ENCODE measurements at regions of chr11 and their contacts with region 1.

Region 1: GRCh38 chr11:61392981-61393595 is 701 bp downstream of the TMEM216 start:
- DNase-seq: no peak
- ATAC-seq: peak; percentile 37 to 41
- H3K4me3 ChIP-seq: peak overlapping the region; percentile 74
- H3K27ac ChIP-seq: peak overlapping the region; percentile 86
- H3K4me1 ChIP-seq: peaks cover 19% of the 10 kb centered on the region
- H3K27me3 ChIP-seq: no peaks in the 10 kb centered on the region
- CTCF ChIP-seq: no peak

Region 2: GRCh38 chr11:61332797-61333549 is 60.1 kb before region 1 on chr11 and contains the starts of genes DDB1 and TKFC:
- intact Hi-C with region 1: loop called (anchors 10 kb)
- DNase-seq: peak; percentile 97
- ATAC-seq: peak; percentile 97 to 98
- H3K4me3 ChIP-seq: peak within 1 kb of the TSS; percentile 89
- H3K27ac ChIP-seq: peak within 1 kb of the TSS; percentile 92
- H3K4me1 ChIP-seq: peaks cover 45% of the 10 kb centered on the region
- H3K27me3 ChIP-seq: no peaks in the 10 kb centered on the region
- CTCF ChIP-seq: no peak
- total RNA-seq, gene DDB1: 122 TPM
- total RNA-seq, gene TKFC: 35.0 TPM

Region 3: GRCh38 chr11:61509043-61510029 is 116.2 kb after region 1 on chr11:
- intact Hi-C with region 1: no loop called
- DNase-seq: peak; percentile 76
- ATAC-seq: peak; percentile 86 to 91
- H3K4me3 ChIP-seq: peak overlapping the region; percentile 42
- H3K27ac ChIP-seq: no peak overlapping the region
- H3K4me1 ChIP-seq: peaks cover 11% of the 10 kb centered on the region
- H3K27me3 ChIP-seq: peaks cover 68% of the 10 kb centered on the region
- CTCF ChIP-seq: peak; percentile 62

Region 4: DNA sequence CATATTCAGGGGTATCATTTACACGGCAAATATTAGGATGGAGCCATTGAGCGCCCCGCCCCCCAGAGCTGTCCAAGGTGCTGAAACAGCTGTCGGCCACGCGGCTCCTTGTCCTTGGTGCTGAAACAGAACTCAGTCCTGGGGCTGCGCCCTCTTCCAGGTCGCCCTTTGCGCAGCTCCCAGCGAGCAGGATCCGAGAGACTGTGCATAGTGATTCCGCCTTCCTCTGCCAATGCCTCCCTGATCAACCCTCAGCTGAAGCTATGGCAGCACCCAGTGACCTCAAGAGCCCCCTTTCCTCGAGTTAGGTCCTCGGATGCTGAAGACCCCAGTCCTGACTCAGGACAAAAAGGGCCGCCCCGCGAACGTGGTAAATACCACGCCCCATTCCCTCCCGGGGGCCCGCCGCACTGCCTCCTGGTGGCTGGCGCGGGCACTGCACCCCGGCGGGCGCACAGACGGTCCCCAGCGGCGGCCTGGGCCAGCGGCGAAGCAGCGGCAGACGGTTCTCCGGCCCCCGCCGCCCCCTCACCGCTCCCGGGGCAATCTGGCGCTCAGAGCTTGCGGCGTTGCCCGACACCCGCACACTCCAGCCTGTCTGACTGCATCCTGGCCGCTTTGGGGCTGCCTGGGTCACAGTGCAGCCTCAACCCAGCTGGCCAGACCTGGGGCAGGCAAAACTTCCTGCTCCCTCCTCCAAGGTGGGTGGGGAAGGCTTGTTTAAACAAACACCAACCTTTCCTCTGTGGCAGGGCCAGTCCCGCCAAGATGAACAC is 174.4 kb after region 1 on chr11:
- intact Hi-C with region 1: no loop called
- DNase-seq: peak; percentile 80
- ATAC-seq: peak; percentile 82 to 87
- H3K4me3 ChIP-seq: no peak overlapping the region
- H3K27ac ChIP-seq: no peak overlapping the region
- H3K4me1 ChIP-seq: peaks cover 6% of the 10 kb centered on the region
- H3K27me3 ChIP-seq: peaks cover 26% of the 10 kb centered on the region
- CTCF ChIP-seq: peak; percentile 41

Region 5: DNA sequence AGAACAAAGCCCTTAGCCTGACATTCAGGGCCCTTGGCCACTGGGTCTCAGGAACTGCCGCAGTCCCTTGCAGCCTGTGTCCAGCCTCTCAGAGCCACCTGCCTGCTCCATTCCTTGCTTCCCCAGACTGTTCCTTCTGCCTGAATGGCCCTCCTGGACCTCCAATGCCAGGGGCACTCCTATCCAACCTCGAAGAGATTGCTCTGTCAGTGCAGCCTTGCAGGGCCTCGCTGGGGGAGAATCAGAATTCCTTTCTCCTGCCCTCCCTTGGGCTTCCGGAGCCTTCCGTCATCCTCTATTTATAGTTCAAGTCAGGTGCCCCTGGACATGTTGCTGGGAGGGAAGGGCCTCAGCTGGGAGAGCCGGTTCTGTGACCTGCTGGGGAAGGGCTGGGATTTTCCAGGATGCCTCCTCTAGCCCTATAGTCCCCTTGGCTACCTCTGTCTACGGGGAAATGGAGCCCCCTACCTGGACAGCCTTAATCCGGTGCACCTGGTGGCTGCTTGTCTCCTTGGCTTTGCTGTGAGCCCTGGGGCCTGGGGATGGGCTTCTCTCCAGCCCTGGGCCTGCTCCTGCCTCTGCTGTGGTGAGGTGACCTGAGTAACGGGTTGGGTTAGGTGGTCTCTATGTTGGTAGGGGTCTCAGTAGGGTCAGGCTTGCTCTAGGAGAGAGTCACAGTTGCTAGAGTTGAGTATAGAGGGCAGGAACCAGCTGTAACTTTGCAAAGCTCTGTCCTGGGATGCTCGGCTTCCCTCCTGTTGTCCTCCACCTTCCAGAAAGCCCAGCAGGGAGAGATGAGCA is 233.7 kb after region 1 on chr11:
- intact Hi-C with region 1: no loop called
- DNase-seq: peak; percentile 81
- ATAC-seq: peak; percentile 91 to 95
- H3K4me3 ChIP-seq: no peak overlapping the region
- H3K27ac ChIP-seq: peak overlapping the region; percentile 49
- H3K4me1 ChIP-seq: peaks cover 15% of the 10 kb centered on the region
- H3K27me3 ChIP-seq: no peaks in the 10 kb centered on the region
- CTCF ChIP-seq: no peak

Region 6: GRCh38 chr11:61797263-61797944 is 404.3 kb after region 1 on chr11:
- intact Hi-C with region 1: no loop called
- DNase-seq: peak; percentile 69
- ATAC-seq: peak; percentile 53 to 60
- H3K4me3 ChIP-seq: no peak overlapping the region
- H3K27ac ChIP-seq: peak overlapping the region; percentile 50
- H3K4me1 ChIP-seq: peaks cover 14% of the 10 kb centered on the region
- H3K27me3 ChIP-seq: no peaks in the 10 kb centered on the region
- CTCF ChIP-seq: peak; percentile 88

Measured in lower lobe of right lung (tissue), 2 donors.